WTC11 (cell line): ENCODE measurements at regions of chr7 and their contacts with region 1.

Region 1: DNA sequence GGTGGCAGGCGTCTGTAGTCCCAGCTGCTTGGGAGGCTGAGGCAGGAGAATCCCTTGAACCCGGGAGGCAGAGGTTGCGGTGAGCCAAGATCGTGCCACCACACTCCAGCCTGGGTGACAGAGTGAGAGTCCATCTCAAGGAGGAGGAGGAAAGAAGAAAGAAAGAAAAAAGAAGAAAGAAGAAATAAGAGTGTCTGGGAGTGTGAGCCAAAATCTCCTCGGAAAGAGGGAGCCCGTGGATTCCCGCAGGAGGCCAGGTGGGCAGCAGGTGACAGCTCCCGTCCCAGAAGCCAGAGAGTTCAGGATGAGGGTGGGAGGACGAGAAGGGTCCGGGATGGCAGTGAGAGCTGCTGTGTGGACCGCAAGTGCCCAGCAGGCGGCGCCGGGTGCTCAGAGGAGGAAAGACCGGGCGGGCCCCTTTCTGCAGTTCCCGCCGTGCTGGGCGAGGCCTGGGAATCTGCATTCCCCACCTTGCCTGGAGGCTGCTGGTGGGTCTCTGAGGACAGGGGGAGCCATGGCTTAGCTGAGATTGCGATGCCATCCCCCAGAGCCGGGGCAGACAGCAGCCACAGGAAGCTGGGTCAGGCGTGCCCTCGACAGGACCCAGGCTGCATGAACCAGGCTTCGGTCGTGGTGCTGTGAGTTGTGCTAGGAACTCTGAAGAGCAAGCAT is 17.1 kb upstream of the AMZ1 start:
- DNase-seq: peak; percentile 85
- ATAC-seq: peak; percentile 94
- H3K4me3 Mint-ChIP-seq: no peak overlapping the region
- H3K27ac Mint-ChIP-seq: no peak overlapping the region
- H3K4me1 Mint-ChIP-seq: no peaks in the 10 kb centered on the region
- H3K27me3 Mint-ChIP-seq: peaks cover 11% of the 10 kb centered on the region
- CTCF ChIP-seq: peak; percentile 77

Region 2: DNA sequence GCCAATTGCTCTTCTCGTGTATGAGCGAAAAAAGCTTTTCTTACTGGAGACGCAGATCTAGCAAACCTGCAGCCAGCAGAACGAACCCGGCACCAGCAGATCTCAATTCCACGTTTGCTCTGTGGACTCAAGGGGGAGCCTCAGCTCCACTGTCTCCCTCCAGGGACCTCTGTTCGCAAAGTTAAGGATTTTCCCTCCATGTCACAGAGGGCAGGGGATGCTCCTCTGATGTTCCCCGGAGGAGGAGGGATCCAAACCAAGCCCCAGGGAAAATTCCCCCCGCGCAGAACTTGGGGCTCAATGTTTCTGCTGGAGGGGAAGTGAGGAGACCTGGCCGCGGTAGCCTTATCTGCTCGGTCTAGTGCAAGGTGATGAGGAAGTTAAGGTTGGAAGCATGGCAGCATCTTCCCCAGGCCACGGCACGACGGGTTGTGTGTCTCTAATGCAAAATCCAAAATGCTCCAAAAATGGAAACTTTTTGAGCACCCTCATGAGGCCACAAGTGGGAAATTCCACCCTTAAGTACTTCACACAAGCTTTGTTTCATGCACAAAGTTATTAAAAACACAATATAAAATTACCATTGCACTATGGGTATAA is 103.1 kb before region 1 on chr7:
- CTCF ChIA-PET with region 1: interaction called, 14 read pairs
- POLR2A ChIA-PET with region 1: interaction called, 4 read pairs
- DNase-seq: peak; percentile 54
- ATAC-seq: peak; percentile 87
- H3K4me3 Mint-ChIP-seq: no peak overlapping the region
- H3K27ac Mint-ChIP-seq: no peak overlapping the region
- H3K4me1 Mint-ChIP-seq: peaks cover 9% of the 10 kb centered on the region
- H3K27me3 Mint-ChIP-seq: no peaks in the 10 kb centered on the region
- CTCF ChIP-seq: no peak

Region 3: GRCh38 chr7:2597273-2597640 is 73.6 kb before region 1 on chr7:
- CTCF ChIA-PET with region 1: no interaction called
- POLR2A ChIA-PET with region 1: no interaction called
- DNase-seq: no peak
- ATAC-seq: no peak
- H3K4me3 Mint-ChIP-seq: no peak overlapping the region
- H3K27ac Mint-ChIP-seq: no peak overlapping the region
- H3K4me1 Mint-ChIP-seq: no peaks in the 10 kb centered on the region; the same call in 1 of the 2 replicates
- H3K27me3 Mint-ChIP-seq: no peaks in the 10 kb centered on the region
- CTCF ChIP-seq: no peak

Region 4: GRCh38 chr7:2632733-2633537 is 37.9 kb before region 1 on chr7:
- CTCF ChIA-PET with region 1: interaction called, 20 read pairs
- POLR2A ChIA-PET with region 1: no interaction called
- DNase-seq: no peak
- ATAC-seq: no peak
- H3K4me3 Mint-ChIP-seq: peak overlapping the region; percentile 86
- H3K27ac Mint-ChIP-seq: peak overlapping the region; percentile 76
- H3K4me1 Mint-ChIP-seq: peaks cover 23% of the 10 kb centered on the region
- H3K27me3 Mint-ChIP-seq: peaks cover 2% of the 10 kb centered on the region; the same call in 1 of the 2 replicates
- CTCF ChIP-seq: no peak

Region 5: DNA sequence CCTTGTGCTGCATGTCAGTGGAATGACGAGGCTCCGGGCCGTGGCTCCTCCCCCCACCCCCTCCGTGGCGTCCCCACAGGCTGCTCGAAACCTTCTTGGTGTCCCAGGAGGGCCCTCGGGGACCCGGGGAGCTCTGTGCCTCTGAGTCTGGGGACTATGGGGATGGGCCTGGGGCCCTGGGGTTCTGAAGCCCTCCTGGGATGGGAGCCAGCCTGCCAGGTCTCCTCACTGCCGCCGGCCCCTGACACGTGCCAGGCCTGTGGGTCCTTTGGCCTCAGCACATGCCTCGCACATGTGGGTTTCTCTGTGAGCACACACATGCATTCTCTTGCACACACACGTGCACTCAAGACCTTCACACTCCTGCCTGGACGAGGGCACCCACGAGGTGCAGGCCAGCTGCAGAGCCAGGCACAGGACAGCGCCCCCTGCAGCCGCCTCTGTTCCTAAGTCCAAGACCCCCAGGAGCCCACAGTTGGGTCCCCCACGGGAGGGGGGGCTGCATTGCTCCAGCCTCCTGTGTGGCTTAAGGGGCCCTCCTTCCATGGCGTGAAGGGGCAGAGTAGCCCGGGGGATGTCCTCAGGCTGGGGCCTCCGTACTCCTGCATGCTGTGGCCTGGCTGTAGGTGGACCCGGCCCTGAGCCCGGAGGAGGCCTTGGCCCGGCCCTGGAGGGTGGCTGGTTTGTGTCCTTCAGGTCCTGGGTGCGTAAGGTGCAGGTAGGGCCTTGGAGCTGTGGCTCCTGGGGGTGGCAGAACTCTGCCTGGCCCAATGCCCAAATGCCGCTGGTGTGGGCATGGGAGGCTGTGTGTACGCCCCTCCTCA is 10.1 kb before region 1 on chr7:
- CTCF ChIA-PET with region 1: interaction called, 12 read pairs
- POLR2A ChIA-PET with region 1: no interaction called
- DNase-seq: no peak
- ATAC-seq: no peak
- H3K4me3 Mint-ChIP-seq: no peak overlapping the region
- H3K27ac Mint-ChIP-seq: peak overlapping the region; percentile 83
- H3K4me1 Mint-ChIP-seq: peaks cover 6% of the 10 kb centered on the region; the same call in 1 of the 2 replicates
- H3K27me3 Mint-ChIP-seq: no peaks in the 10 kb centered on the region
- CTCF ChIP-seq: peak; percentile 58

Region 6: DNA sequence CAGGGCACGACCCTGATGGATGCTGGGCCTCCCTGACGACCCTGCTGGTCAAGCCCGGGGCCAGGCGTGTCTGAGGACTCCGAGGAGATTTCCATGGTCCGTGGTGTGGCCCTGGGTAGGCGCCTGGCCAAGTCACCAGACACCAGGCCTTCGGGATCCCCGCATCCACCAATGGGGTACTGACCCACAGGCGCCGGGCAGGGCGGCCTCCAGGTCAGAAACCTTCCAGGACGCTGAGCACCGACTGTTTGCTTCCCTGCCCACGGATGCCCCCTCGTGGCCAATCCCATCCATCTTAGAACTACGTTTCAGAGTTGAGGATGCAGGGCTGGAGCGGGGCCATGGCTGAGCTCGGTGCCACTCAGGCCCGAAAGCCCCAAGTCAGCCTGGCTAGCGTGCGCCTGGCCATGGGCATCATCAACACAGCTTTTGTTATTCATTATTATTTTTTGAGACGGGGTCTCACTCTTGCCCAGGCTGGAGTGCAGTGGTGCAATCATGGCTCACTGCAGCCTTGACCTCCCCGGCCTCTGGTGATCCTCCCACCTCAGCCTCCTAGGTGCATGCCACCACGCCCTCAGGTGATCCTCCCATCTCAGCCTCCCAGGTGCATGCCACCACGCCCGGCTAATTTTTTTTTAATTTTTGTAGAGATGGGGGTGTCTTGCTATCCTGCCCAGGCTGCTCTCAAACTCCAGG is 10.1 kb after region 1 on chr7:
- CTCF ChIA-PET with region 1: interaction called, 98 read pairs
- POLR2A ChIA-PET with region 1: no interaction called
- DNase-seq: peak; percentile 89
- ATAC-seq: peak; percentile 90
- H3K4me3 Mint-ChIP-seq: no peak overlapping the region
- H3K27ac Mint-ChIP-seq: no peak overlapping the region
- H3K4me1 Mint-ChIP-seq: no peaks in the 10 kb centered on the region
- H3K27me3 Mint-ChIP-seq: peaks cover 2% of the 10 kb centered on the region
- CTCF ChIP-seq: peak; percentile 69

Region 7: DNA sequence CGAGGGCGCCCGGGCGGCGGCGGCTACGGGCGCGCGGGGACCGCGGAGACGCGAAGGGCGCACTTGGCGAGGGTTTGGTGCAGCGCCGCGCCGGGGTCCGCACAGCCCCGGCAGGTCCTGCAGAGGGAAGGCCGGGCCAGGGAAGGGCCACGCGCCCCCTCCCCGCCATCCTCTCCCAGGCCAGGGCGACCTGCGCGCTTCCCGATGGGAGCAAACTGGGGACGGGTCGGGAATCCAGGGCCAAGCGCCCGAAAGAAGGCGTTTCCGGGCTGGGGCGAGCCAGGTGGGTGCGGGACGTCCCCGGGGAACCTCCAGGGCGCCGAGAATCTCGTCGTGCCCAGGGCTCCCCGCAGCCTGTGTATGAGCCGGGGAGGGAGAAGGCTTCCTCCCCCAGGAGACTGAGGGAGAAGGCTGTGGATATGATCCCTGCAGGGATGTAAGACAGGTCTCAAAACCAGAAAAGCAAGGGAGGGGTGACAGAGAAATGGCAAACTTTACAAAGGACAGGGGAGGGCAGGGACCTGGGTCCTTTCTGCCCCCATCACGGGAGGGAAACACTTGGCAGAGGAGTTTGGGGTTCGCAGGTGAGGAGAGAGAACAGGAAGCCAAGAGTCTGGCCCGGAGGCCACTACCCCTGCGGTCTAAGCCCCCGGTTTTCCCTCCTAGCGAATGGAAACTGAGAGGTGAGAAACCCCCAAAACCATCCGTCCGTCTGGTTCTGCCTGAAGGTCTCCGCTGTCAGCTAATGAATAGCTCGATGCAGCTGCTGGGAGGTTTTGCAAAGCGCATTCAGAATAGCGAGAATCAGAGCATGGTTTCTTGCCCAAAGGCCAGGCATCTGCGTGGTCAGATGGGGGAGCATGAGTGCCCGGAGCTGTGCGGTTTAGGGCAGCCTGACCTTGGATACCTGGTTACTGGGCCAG is 17.8 kb after region 1 on chr7:
- CTCF ChIA-PET with region 1: interaction called, 98 read pairs
- POLR2A ChIA-PET with region 1: no interaction called
- DNase-seq: peak; percentile 53
- ATAC-seq: peak; percentile 73
- H3K4me3 Mint-ChIP-seq: peak overlapping the region; percentile 61
- H3K27ac Mint-ChIP-seq: no peak overlapping the region
- H3K4me1 Mint-ChIP-seq: peaks cover 12% of the 10 kb centered on the region
- H3K27me3 Mint-ChIP-seq: peaks cover 32% of the 10 kb centered on the region
- CTCF ChIP-seq: no peak

Region 8: GRCh38 chr7:2732959-2733584 is 62.2 kb after region 1 on chr7:
- CTCF ChIA-PET with region 1: no interaction called
- POLR2A ChIA-PET with region 1: no interaction called
- DNase-seq: peak; percentile 9
- ATAC-seq: no peak
- H3K4me3 Mint-ChIP-seq: no peak overlapping the region
- H3K27ac Mint-ChIP-seq: peak overlapping the region; percentile 91
- H3K4me1 Mint-ChIP-seq: peaks cover 39% of the 10 kb centered on the region
- H3K27me3 Mint-ChIP-seq: no peaks in the 10 kb centered on the region
- CTCF ChIP-seq: no peak

Region 9: DNA sequence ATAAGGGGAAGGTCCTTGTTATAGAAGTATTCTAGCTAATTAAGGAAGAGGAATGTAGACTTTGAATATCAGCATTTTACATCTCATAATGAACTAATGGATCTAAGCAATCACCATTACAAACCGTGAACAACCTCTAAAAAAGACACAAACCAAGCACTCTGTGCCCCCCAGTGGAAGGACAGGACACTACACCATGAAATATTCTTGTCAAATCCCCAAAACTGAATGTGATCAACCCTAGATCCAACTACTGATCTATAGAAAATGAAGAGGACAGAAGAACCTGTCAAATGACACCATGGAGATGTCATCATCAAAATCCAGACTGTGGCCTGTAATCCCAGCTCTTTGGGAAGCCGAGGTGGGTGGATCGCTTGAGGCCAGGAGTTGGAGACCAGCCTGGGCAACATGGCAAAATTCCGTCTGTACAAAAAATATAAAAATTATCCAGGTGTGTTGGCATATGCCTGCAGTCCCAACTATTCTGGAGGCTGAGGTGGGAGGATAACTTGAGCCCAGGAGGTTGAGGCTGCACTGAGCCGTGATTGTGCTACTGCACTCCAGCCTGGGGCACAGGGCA is 484.1 kb after region 1 on chr7:
- CTCF ChIA-PET with region 1: no interaction called
- POLR2A ChIA-PET with region 1: no interaction called
- DNase-seq: peak; percentile 31
- ATAC-seq: peak; percentile 60; the same call in 1 of the 2 replicates
- H3K4me3 Mint-ChIP-seq: no peak overlapping the region
- H3K27ac Mint-ChIP-seq: no peak overlapping the region
- H3K4me1 Mint-ChIP-seq: peaks cover 19% of the 10 kb centered on the region
- H3K27me3 Mint-ChIP-seq: no peaks in the 10 kb centered on the region; the same call in 1 of the 2 replicates
- CTCF ChIP-seq: peak; percentile 59